ENCODE measurements at regions of chr19 and their contacts with region 1.

Region 1: GRCh38 chr19:12983542-12984142 is 11.6 kb upstream of the NFIX start:
- DNase-seq: peak; percentile 64 to 83 (median 77)
- H3K4me3 ChIP-seq: peak overlapping the region in 1 of 4 donors; percentile 42
- H3K27ac ChIP-seq: no peak overlapping the region
- H3K4me1 ChIP-seq: no peaks in the 10 kb centered on the region
- H3K27me3 ChIP-seq: no peaks in the 10 kb centered on the region
- CTCF ChIP-seq: peak; percentile 56 to 99 (median 86)
- POLR2A ChIP-seq: no peak

Region 2: DNA sequence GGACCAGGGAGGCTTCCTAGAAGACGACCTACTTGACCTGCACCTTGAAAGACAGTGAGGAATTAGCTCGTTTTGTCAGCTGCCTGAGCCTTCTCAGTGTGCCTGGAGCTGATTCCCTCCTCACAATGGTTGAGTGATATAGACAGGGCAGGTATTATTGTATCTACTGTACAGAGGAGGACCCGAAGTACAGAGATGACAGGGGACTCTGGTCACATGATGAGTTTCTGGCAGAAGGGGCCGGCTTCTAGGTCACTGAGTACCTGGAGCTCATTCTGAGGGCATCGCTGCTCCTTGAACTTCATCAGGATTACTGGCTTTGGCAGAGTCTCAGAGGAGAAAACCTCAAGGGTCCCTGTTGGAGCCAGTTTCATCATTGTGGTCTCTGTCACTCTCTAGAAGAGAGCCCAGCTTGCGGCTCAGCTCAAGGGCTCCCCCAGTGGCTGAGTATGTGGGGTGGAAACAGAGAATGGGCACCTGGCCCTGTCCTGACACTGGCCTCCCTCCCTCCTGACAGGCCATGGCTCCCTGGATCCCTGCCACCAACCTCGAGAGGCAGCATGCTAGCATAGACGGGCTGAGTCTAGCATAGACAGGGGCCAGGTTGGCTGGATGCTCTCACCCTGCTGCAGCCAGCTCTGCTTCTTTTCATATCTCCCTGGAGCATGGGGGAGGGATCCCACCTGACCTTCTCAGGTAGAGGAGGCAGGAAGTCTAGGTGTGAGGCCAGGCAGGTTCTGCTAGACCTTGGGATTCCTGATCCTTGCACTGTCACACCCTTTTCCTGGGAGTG is 50.4 kb after region 1 on chr19:
- intact Hi-C with region 1: loop called in 1 of 2 experiments (anchors 5 kb)
- DNase-seq: peak; percentile 85 to 94 (median 93)
- H3K4me3 ChIP-seq: no peak overlapping the region
- H3K27ac ChIP-seq: peak overlapping the region in 2 of 5 donors; percentile 29 to 50
- H3K4me1 ChIP-seq: peaks cover 13 to 41% of the 10 kb centered on the region in 2 donors
- H3K27me3 ChIP-seq: no peaks in the 10 kb centered on the region
- CTCF ChIP-seq: peak; percentile 64 to 81 (median 78)
- POLR2A ChIP-seq: no peak

Region 3: GRCh38 chr19:13060964-13061927 is 77.6 kb after region 1 on chr19:
- intact Hi-C with region 1: loop called in 1 of 2 experiments (anchors 5 kb)
- DNase-seq: peak; percentile 66 to 89 (median 84)
- H3K4me3 ChIP-seq: peak overlapping the region in 2 of 4 donors; percentile 44
- H3K27ac ChIP-seq: peak overlapping the region in 1 of 5 donors; percentile 7
- H3K4me1 ChIP-seq: peaks cover 11 to 29% of the 10 kb centered on the region in 2 donors
- H3K27me3 ChIP-seq: no peaks in the 10 kb centered on the region
- CTCF ChIP-seq: peak; percentile 94 to 98 (median 95)
- POLR2A ChIP-seq: peak in 1 of 2 donors; percentile 12

Region 4: DNA sequence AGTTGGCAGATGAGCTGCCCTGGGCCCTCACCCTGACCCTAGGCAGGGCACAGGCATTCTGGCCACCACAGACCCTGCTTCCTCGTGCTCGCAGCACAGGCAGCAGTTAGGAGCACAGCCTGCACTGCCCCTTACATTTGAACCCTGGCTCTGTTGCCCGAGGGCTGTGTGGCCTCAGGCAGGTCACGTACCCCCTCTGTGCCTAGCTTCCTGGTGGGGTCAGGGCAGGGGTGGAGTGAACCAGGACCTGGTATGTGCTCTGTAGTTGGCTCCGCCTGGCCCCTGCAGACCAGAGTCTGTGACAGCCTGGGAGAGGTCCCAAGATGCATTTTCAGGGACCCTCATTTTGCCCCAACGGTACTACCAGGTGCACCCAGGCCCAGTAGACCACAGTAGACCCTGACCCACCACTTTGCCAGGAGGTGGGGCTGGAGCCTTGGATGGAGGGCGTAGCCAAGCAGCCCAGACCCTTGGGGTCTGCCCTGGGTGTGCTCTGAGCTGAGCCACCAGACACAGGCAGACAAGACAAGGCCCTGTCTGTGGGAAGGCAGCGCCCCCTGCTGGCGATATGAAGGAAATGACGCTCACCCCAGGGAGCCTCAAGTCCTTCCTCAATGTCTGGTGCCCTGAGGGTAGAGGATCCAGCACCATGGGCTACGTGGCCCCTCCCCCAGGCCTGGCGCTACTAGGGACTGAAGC is 109.9 kb after region 1 on chr19:
- intact Hi-C with region 1: loop called (anchors 2 to 5 kb)
- DNase-seq: peak; percentile 68 to 92 (median 80)
- H3K4me3 ChIP-seq: no peak overlapping the region
- H3K27ac ChIP-seq: peak overlapping the region in 1 of 5 donors; percentile 21
- H3K4me1 ChIP-seq: peaks cover 6 to 15% of the 10 kb centered on the region in 2 donors
- H3K27me3 ChIP-seq: peaks cover 8% of the 10 kb centered on the region
- CTCF ChIP-seq: peak; percentile 90 to 97 (median 94)
- POLR2A ChIP-seq: no peak